A549 (cell line): ENCODE measurements at regions of chr10 and their contacts with region 1.

Region 1: GRCh38 chr10:11757821-11758463 is 15.8 kb downstream of the ECHDC3 start:
- DNase-seq: peak; percentile 84 to 87
- ATAC-seq: peak; percentile 95 to 99
- H3K4me3 ChIP-seq: no peak overlapping the region
- H3K27ac ChIP-seq: 0 out of 6 replicates have a peak overlapping the region, but pooled peaks of 1 of the 2 experiments have one; percentile 11
- H3K4me1 ChIP-seq: no peaks in the 10 kb centered on the region
- CTCF ChIP-seq: peak; percentile 92
- EP300 ChIP-seq: no peak
- POLR2A ChIP-seq: no peak
- RAD21 ChIP-seq: peak; percentile 93 to 96

Region 2: DNA sequence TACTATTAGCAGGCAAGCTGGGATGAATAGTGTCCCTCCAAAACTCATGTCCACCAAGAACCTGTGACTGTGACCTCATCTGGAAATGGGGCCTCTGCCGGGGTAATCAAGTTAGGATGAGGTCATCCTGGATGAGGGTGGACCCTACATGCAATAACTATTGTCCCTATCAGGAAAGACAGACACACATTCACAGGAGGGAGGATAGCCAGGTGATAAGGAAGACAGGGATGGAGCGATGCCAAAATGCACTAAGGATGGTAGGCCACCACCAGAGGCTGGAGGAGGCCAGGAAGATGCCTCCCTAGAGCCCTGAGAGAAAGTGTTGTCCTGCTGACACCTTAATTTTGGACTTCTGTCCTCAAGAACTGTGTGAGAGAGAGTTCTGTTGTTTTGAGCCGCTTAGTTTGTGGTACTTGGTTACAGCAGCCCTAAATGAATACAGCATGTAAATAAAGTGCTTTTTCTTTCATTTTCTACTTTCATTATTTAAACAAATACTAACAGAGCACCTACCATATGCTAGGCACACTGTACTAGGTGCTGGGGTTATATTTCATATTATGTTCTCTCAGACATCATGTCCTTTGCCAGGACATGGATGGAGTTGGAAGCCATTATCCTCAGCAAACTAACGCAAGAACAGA is 258.4 kb before region 1 on chr10:
- CTCF ChIA-PET with region 1: interaction called, 11 read pairs
- POLR2A ChIA-PET with region 1: no interaction called
- DNase-seq: no peak
- ATAC-seq: no peak
- H3K4me3 ChIP-seq: no peak overlapping the region
- H3K27ac ChIP-seq: no peak overlapping the region
- H3K4me1 ChIP-seq: no peaks in the 10 kb centered on the region
- CTCF ChIP-seq: no peak
- EP300 ChIP-seq: no peak
- POLR2A ChIP-seq: no peak
- RAD21 ChIP-seq: no peak

Region 3: GRCh38 chr10:11515596-11516430 is 242.1 kb before region 1 on chr10:
- CTCF ChIA-PET with region 1: interaction called, 146 read pairs
- POLR2A ChIA-PET with region 1: no interaction called
- DNase-seq: peak; percentile 28 to 69
- ATAC-seq: peak; percentile 88 to 91
- H3K4me3 ChIP-seq: no peak overlapping the region
- H3K27ac ChIP-seq: no peak overlapping the region
- H3K4me1 ChIP-seq: no peaks in the 10 kb centered on the region
- CTCF ChIP-seq: peak; percentile 90
- EP300 ChIP-seq: no peak
- POLR2A ChIP-seq: no peak
- RAD21 ChIP-seq: peak; percentile 95 to 97

Region 4: GRCh38 chr10:11610826-11611247 is 147.1 kb before region 1 on chr10:
- CTCF ChIA-PET with region 1: interaction called, 14 read pairs
- POLR2A ChIA-PET with region 1: no interaction called
- DNase-seq: peak; percentile 25 to 40
- ATAC-seq: peak in 1 of 2 experiments; percentile 56; a peak in 5 of 6 replicates
- H3K4me3 ChIP-seq: peak overlapping the region; percentile 75
- H3K27ac ChIP-seq: peak overlapping the region; percentile 86 to 98
- H3K4me1 ChIP-seq: peaks cover 11% of the 10 kb centered on the region
- CTCF ChIP-seq: no peak
- EP300 ChIP-seq: no peak
- POLR2A ChIP-seq: no peak
- RAD21 ChIP-seq: no peak

Region 5: DNA sequence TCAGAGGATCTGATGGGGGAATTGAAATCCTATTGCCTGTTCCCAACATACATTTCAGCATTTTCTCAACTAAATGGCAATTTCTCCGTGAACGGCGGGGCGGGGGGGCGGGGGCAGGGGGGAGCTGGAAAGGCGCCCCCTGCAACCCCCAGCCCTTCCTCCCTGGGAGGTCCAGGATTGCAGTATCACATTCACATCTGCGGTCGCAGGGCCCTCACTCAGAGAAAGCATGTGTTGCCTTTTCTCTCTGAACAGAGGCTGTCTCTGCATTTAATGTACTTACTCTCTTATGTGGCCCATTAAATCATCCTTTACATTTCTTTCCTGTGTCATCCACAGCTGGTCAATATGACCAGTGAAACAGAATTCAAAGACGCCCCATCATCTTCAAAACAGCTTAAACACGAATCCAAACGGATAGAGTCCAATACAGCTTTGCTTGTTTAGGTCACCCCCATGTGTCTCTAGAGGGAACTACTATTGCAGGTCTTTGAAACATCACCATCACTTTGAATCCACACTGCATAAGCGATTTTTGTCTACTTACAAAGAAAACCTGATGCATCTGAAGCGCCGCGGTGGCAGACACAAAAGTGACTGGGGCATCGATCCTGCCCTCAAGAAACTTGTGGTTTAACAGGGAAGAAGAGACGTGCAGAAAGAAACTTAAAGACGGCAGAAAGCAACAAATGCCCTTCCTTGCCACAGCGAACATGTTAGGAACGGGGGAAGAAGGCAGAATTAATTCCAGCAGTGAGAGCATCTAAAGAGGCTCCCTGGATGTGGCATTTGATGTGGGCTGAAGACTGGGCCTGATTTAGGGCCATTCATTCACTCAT is 32.8 kb before region 1 on chr10:
- CTCF ChIA-PET with region 1: interaction called, 29 read pairs
- POLR2A ChIA-PET with region 1: no interaction called
- DNase-seq: peak; percentile 71 to 72
- ATAC-seq: peak; percentile 95 to 97
- H3K4me3 ChIP-seq: no peak overlapping the region
- H3K27ac ChIP-seq: no peak overlapping the region
- H3K4me1 ChIP-seq: no peaks in the 10 kb centered on the region
- CTCF ChIP-seq: peak; percentile 67
- EP300 ChIP-seq: no peak
- POLR2A ChIP-seq: no peak
- RAD21 ChIP-seq: peak; percentile 85 to 93

Region 6: GRCh38 chr10:11772575-11773288 is 14.8 kb after region 1 on chr10:
- CTCF ChIA-PET with region 1: interaction called, 32 read pairs
- POLR2A ChIA-PET with region 1: no interaction called
- DNase-seq: no peak
- ATAC-seq: no peak
- H3K4me3 ChIP-seq: no peak overlapping the region
- H3K27ac ChIP-seq: no peak overlapping the region
- H3K4me1 ChIP-seq: peaks cover 8% of the 10 kb centered on the region; the same call in 1 of the 3 replicates
- CTCF ChIP-seq: no peak
- EP300 ChIP-seq: no peak
- POLR2A ChIP-seq: no peak
- RAD21 ChIP-seq: no peak

Region 7: DNA sequence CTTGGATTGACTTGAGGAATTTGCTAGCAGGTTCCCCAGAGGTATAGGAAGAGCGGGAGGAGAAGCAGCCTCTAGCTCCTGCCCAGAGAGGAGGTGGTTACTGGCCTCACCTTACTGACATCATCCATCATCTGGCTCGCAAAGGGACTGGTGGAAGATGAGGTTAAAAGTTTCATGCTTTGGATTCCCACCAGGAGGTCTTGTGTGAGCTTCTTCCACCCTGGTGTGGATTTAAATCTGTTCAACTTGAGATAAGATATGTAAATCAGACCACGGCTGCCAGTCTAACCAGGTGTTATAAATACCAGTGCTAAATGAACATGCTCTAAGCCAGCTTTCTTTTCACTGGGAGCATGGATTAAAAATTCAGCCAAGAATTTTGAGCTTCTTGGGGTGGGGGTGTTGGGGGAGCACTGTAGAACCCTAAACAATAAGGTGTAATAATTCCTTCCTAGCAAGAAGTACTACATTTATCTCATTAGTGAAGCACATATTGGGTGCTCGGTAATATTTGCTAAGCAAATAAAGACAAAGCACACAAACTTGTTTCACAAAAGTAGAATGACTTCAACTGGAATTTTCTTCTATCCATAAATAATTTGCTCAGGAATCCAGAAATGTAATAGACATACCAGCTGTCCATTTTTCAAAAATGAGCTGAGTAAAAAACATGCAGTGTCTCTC is 73.0 kb after region 1 on chr10:
- CTCF ChIA-PET with region 1: no interaction called
- POLR2A ChIA-PET with region 1: no interaction called
- DNase-seq: no peak
- ATAC-seq: peak; percentile 57 to 60; a peak in 4 of 6 replicates
- H3K4me3 ChIP-seq: peak overlapping the region; percentile 2; the same call in 1 of the 3 replicates
- H3K27ac ChIP-seq: peak overlapping the region; percentile 69 to 87
- H3K4me1 ChIP-seq: peaks cover 29% of the 10 kb centered on the region
- CTCF ChIP-seq: no peak
- EP300 ChIP-seq: no peak
- POLR2A ChIP-seq: no peak
- RAD21 ChIP-seq: no peak